G401 (cell line): ENCODE measurements at regions of chr2 and their contacts with region 1.

Region 1: GRCh38 chr2:101205521-101205998 is 47.1 kb upstream of the CNOT11 start:
- DNase-seq: peak; percentile 76

Region 2: GRCh38 chr2:101036562-101037457 is 168.8 kb before region 1 on chr2:
- in situ Hi-C with region 1: loop called (anchors 25 kb)
- DNase-seq: no peak

Region 3: GRCh38 chr2:101089419-101089818 is 116.1 kb before region 1 on chr2:
- in situ Hi-C with region 1: no loop called
- DNase-seq: no peak